HepG2 (cell line): ENCODE measurements at regions of chr19 and their contacts with region 1.

Region 1: GRCh38 chr19:29610563-29611271 is 4.6 kb downstream of the POP4 start:
- DNase-seq: peak; percentile 64
- ATAC-seq: peak; percentile 88
- H3K4me3 ChIP-seq: no peak overlapping the region
- H3K27ac ChIP-seq: no peak overlapping the region
- H3K4me1 ChIP-seq: peaks cover 8% of the 10 kb centered on the region
- H3K27me3 ChIP-seq: no peaks in the 10 kb centered on the region; a peak in 1 of 5 replicates
- CTCF ChIP-seq: peak; percentile 94
- EP300 ChIP-seq: no peak
- POLR2A ChIP-seq: no peak
- RAD21 ChIP-seq: peak; percentile 87

Region 2: DNA sequence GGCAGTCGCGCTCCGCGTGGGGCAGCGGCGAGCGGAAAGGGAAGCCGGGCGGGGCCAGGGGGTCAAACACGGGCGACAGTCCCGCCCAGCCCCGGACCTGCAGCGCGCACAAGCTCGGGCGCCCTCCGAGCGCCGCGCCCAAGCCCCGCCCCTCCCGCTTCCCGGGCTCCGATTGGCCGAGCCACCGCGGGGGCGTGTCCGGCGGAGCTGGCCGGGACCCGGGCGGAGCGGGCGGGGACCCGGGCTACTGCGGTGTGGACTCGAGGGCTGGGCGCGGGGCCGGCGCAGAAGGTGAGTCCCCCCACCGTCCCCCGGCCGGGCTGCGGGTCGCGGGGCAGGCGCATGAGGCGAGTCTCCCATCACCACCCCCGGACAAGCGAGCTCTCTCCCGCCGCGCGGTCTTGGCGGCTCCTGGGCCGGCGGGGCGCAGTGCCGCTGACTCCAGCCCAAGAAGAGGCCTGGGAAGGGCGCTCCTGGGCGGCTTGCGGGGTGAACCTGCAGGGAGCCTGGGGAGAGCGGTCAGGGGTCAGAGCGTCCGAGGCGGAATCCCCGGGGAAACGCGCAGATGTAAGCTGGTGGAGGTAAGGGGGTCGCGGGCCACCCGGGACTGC is 54.6 kb after region 1 on chr19 and contains the start of gene PLEKHF1:
- CTCF ChIA-PET with region 1: no interaction called
- POLR2A ChIA-PET with region 1: interaction called, 32 read pairs
- in situ Hi-C with region 1: no loop called
- intact Hi-C with region 1: loop called (anchors 2 kb)
- DNase-seq: peak; percentile 58
- ATAC-seq: peak; percentile 90
- H3K4me3 ChIP-seq: peak within 1 kb of the TSS; percentile 68 to 90 (median 73)
- H3K27ac ChIP-seq: peak within 1 kb of the TSS; percentile 48
- H3K4me1 ChIP-seq: peaks cover 54% of the 10 kb centered on the region
- H3K27me3 ChIP-seq: peaks cover 10 to 20% of the 10 kb centered on the region in 2 experiments; a peak in 4 of 5 replicates
- CTCF ChIP-seq: no peak
- EP300 ChIP-seq: no peak
- POLR2A ChIP-seq: 0 out of 4 replicates have a peak, but pooled peaks of 1 of the 2 experiments have one; percentile 27
- RAD21 ChIP-seq: no peak
- total RNA-seq, gene PLEKHF1: 3.2 and 3.8 TPM in 2 replicates

Region 3: DNA sequence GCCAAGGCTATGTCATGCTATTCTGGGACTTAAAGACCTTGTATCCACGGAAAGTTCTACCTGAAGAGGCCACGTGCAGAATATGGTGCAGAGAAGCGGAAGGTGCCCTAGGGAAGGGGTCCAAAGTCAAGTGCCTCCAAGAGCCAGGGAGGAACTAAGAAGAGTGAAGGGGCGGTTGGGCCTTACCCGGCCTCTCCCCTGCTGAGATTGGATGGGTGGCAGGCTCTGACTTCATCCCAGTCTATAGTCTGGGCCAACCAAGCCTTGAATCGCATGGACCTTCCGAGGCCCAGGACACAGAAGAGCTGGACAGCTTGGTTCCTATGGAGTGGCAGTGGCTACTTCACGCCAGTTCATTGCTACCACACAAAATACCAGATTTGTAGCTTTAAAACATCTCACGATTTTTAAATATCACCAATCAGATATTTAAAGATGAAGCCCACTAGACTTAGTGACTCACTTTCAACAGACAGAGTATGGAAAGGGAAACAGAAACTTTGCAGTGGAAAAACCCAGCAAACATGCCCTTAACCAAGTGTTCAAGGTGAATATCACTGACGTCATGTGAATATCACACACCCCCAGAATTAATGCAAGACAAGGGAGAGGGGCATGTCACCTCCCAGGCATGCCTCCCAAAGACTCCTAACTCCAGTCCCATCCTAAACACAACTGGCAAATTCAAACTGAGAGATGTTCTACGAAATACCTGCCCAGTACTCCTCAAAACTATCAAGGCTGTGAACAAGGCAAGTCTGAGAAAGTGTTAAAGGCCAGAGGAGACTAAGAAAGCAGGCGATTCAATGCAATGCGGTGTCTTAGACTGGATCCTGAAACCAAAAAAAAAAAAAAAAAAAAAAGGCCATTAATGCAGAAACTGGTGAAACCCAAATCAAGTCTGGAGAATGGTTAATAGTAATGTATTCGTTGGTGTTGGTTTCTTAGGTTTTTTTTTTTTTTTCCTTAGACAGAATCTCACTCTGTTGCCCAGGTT is 94.1 kb after region 1 on chr19:
- CTCF ChIA-PET with region 1: no interaction called
- POLR2A ChIA-PET with region 1: interaction called, 17 read pairs
- in situ Hi-C with region 1: no loop called
- intact Hi-C with region 1: loop called (anchors 5 kb)
- DNase-seq: no peak
- ATAC-seq: no peak
- H3K4me3 ChIP-seq: no peak overlapping the region
- H3K27ac ChIP-seq: no peak overlapping the region
- H3K4me1 ChIP-seq: peaks cover 40% of the 10 kb centered on the region
- H3K27me3 ChIP-seq: no peaks in the 10 kb centered on the region; a peak in 1 of 5 replicates
- CTCF ChIP-seq: no peak
- EP300 ChIP-seq: no peak
- POLR2A ChIP-seq: no peak
- RAD21 ChIP-seq: no peak

Region 4: DNA sequence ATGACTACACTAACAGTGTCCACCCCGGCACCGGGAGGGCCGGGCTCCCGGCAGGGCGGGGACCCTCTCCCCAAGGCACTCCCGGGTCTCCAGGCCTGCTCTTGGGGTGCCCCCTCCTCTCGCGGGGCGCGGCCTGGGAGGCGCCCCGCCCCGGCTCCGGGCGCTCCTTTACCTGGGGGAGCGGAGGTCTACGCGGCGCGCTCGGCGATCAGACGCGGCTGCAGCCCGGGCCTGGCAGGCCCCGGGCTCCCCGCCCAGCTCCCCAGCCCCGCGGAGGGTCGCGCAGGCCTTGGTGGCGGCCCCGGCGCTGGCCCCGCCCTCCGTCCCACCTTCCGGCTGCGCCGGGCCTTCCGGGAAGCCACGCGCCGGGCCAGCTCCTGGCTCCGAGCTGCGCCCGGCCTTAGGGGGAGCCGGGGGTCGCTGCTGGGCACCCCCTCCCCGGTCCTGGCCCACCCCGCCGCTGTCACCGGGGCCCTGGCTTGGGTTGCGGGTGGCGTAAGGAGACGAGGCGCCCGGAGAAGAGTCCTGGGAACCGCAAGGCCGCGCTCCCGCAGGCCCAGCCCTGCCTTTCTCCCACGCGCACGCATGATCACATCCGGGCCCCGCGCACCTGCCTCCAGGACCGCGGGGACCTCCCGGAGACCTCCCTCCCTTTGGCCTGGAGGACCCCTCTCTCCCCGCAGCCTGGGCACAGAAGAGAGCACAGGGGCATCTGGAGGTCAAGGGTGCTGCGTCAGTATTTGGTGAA is 104.4 kb after region 1 on chr19 and contains the start of gene C19orf12:
- CTCF ChIA-PET with region 1: interaction called, 3 read pairs
- POLR2A ChIA-PET with region 1: interaction called, 44 read pairs
- in situ Hi-C with region 1: no loop called
- intact Hi-C with region 1: loop called (anchors 1 kb)
- DNase-seq: peak; percentile 18
- ATAC-seq: peak; percentile 81
- H3K4me3 ChIP-seq: peak within 1 kb of the TSS; percentile 77 to 96 (median 85)
- H3K27ac ChIP-seq: peak within 1 kb of the TSS; percentile 87
- H3K4me1 ChIP-seq: peaks cover 54% of the 10 kb centered on the region
- H3K27me3 ChIP-seq: no peaks in the 10 kb centered on the region
- CTCF ChIP-seq: no peak
- EP300 ChIP-seq: no peak
- POLR2A ChIP-seq: peak; percentile 70 to 80
- RAD21 ChIP-seq: no peak
- total RNA-seq, gene C19orf12: 34.4 and 34.8 TPM in 2 replicates